CD8-positive, alpha-beta T cell (primary cell): ENCODE measurements at regions of chr1 and their contacts with region 1.

Region 1: DNA sequence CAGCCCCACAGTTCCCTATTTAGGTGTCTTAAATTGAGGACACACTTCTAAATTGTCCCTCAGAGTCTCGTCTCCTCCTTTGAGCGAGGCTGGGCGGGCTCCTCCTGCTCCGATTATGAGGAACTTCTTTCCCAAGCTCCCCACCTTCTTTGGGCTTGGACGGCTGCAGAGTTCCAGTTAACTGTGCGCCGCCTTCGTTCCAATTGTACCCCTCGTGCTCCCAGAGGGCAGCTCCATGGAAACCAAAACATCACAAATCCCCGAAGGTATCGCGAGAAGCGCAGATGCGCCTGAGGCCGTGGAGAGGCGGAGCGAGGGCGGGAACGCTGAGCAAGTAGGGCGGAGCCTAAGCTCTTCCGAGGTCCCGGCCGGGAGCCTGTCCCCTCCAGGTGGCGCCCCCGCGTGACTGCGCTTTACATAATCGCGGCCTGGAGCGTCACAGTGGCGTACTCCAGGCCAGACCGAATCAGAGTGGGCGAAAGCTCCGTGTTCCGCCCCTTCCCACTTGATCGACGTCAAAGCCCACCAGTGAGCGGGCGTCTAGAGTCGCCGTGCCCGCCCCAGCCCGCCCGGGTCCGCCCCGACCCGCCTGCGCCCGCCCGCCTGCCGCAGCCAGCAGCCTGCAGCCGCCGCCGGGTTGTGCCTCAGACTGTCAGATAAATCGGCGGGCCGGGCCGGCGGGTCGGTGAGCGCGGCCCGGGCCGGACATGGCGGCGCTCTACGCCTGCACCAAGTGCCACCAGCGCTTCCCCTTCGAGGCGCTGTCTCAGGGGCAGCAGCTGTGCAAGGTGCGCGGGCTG is at the start of gene FAM76A:
- DNase-seq: peak; percentile 99 to 100 (median 99)
- ATAC-seq: peak; percentile 92
- H3K4me3 ChIP-seq: peak within 1 kb of the TSS; percentile 63 to 92
- H3K4me3 Mint-ChIP-seq: peak within 1 kb of the TSS; percentile 84
- H3K27ac ChIP-seq: peak within 1 kb of the TSS; percentile 94 to 96
- H3K27ac Mint-ChIP-seq: peak within 1 kb of the TSS; percentile 94
- H3K4me1 ChIP-seq: peaks cover 15% of the 10 kb centered on the region
- H3K4me1 Mint-ChIP-seq: peaks cover 26% of the 10 kb centered on the region
- H3K27me3 ChIP-seq: no peaks in the 10 kb centered on the region
- H3K27me3 Mint-ChIP-seq: no peaks in the 10 kb centered on the region
- CTCF ChIP-seq: peak; percentile 25
- total RNA-seq, gene FAM76A: 29.5 to 31.7 TPM

Region 2: GRCh38 chr1:27234049-27234882 is 491.3 kb before region 1 on chr1 and contains the start of gene WDTC1:
- CTCF ChIA-PET with region 1: no interaction called
- POLR2A ChIA-PET with region 1: no interaction called
- intact Hi-C with region 1: loop called in 1 of 2 experiments (anchors 1 kb)
- DNase-seq: peak; percentile 97 to 99 (median 98)
- ATAC-seq: peak; percentile 90
- H3K4me3 ChIP-seq: peak within 1 kb of the TSS; percentile 58 to 66
- H3K4me3 Mint-ChIP-seq: peak within 1 kb of the TSS; percentile 99
- H3K27ac ChIP-seq: peak within 1 kb of the TSS; percentile 74 to 93
- H3K27ac Mint-ChIP-seq: peak within 1 kb of the TSS; percentile 95
- H3K4me1 ChIP-seq: peaks cover 25% of the 10 kb centered on the region
- H3K4me1 Mint-ChIP-seq: peaks cover 37% of the 10 kb centered on the region
- H3K27me3 ChIP-seq: no peaks in the 10 kb centered on the region
- H3K27me3 Mint-ChIP-seq: no peaks in the 10 kb centered on the region
- CTCF ChIP-seq: no peak
- total RNA-seq, gene WDTC1: 17.8 to 18.1 TPM

Region 3: GRCh38 chr1:27372808-27373690 is 352.5 kb before region 1 on chr1:
- CTCF ChIA-PET with region 1: no interaction called
- POLR2A ChIA-PET with region 1: no interaction called
- intact Hi-C with region 1: no loop called
- DNase-seq: peak in 1 of 9 experiments; percentile 11
- ATAC-seq: no peak
- H3K4me3 ChIP-seq: no peak overlapping the region
- H3K4me3 Mint-ChIP-seq: no peak overlapping the region
- H3K27ac ChIP-seq: no peak overlapping the region
- H3K27ac Mint-ChIP-seq: no peak overlapping the region
- H3K4me1 ChIP-seq: peaks cover 5% of the 10 kb centered on the region
- H3K4me1 Mint-ChIP-seq: peaks cover 10% of the 10 kb centered on the region
- H3K27me3 ChIP-seq: no peaks in the 10 kb centered on the region
- H3K27me3 Mint-ChIP-seq: no peaks in the 10 kb centered on the region
- CTCF ChIP-seq: no peak

Region 4: GRCh38 chr1:27489910-27490741 is 235.4 kb before region 1 on chr1 and contains the start of gene WASF2:
- CTCF ChIA-PET with region 1: no interaction called
- POLR2A ChIA-PET with region 1: no interaction called
- intact Hi-C with region 1: loop called in 1 of 2 experiments (anchors 1 kb)
- DNase-seq: peak; percentile 93 to 98 (median 97)
- ATAC-seq: peak; percentile 95
- H3K4me3 ChIP-seq: peak within 1 kb of the TSS; percentile 97 to 99
- H3K4me3 Mint-ChIP-seq: peak within 1 kb of the TSS; percentile 98
- H3K27ac ChIP-seq: peak within 1 kb of the TSS; percentile 93 to 97
- H3K27ac Mint-ChIP-seq: peak within 1 kb of the TSS; percentile 99
- H3K4me1 ChIP-seq: peaks cover 19% of the 10 kb centered on the region
- H3K4me1 Mint-ChIP-seq: peaks cover 35% of the 10 kb centered on the region
- H3K27me3 ChIP-seq: no peaks in the 10 kb centered on the region
- H3K27me3 Mint-ChIP-seq: no peaks in the 10 kb centered on the region
- CTCF ChIP-seq: no peak
- total RNA-seq, gene WASF2: 91.6 to 95.0 TPM

Region 5: GRCh38 chr1:27671964-27672749 is 53.4 kb before region 1 on chr1 and contains the start of gene IFI6:
- CTCF ChIA-PET with region 1: interaction called, 13 read pairs
- POLR2A ChIA-PET with region 1: interaction called, 30 read pairs
- intact Hi-C with region 1: loop called (anchors 1 kb)
- DNase-seq: peak; percentile 47 to 94 (median 80)
- ATAC-seq: peak; percentile 92
- H3K4me3 ChIP-seq: peak within 1 kb of the TSS; percentile 48 to 71
- H3K4me3 Mint-ChIP-seq: peak within 1 kb of the TSS; percentile 92
- H3K27ac ChIP-seq: peak within 1 kb of the TSS; percentile 62 to 87
- H3K27ac Mint-ChIP-seq: peak within 1 kb of the TSS; percentile 98
- H3K4me1 ChIP-seq: peaks cover 35% of the 10 kb centered on the region
- H3K4me1 Mint-ChIP-seq: peaks cover 42% of the 10 kb centered on the region
- H3K27me3 ChIP-seq: no peaks in the 10 kb centered on the region
- H3K27me3 Mint-ChIP-seq: no peaks in the 10 kb centered on the region
- CTCF ChIP-seq: peak; percentile 28
- total RNA-seq, gene IFI6: 24.8 to 25.1 TPM

Region 6: DNA sequence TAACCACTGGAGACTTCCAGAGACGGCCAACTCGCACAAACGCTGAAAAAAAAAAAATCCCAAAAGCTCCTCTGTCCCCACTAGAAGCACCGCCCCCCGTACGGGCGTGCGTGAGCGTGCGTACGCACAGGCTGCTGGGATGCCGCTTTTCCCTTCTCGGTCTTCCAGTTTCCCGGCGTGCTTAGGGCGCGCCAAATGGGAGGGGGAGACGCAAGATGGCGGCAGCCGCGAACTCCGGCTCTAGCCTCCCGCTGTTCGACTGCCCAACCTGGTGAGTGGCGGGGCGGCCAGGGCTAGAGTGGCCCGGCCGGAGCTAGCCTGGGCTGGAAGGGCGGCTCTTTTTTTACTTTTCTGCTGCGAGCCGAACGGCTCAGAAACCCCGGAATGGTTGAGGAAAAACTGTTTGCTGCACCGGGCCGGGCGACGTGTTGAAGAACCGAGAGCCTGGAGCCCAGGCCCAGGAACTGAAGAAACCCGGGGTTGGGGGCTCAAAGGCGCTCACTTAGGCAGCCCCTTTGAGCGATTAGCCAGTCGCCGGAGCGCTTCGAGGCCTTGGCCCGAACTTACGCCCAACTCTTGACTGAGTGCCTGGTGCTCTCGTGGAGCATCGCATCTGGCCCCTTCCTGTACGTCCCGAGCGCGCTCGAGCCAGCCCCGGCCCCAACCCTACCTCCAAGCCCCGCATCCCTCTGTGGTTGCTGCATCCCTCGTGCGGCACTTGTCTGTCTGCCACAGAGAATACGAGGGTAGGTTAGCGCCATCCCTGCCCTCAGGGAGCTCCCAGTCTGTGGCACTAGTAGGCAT is 105.2 kb after region 1 on chr1 and contains the start of gene PPP1R8:
- CTCF ChIA-PET with region 1: no interaction called
- POLR2A ChIA-PET with region 1: interaction called, 7 read pairs
- intact Hi-C with region 1: loop called in 1 of 2 experiments (anchors 1 kb)
- DNase-seq: peak; percentile 69 to 96 (median 90)
- ATAC-seq: peak; percentile 99
- H3K4me3 ChIP-seq: peak within 1 kb of the TSS; percentile 91 to 99
- H3K4me3 Mint-ChIP-seq: peak within 1 kb of the TSS; percentile 91
- H3K27ac ChIP-seq: peak within 1 kb of the TSS; percentile 82 to 88
- H3K27ac Mint-ChIP-seq: peak within 1 kb of the TSS; percentile 91
- H3K4me1 ChIP-seq: peaks cover 25% of the 10 kb centered on the region
- H3K4me1 Mint-ChIP-seq: peaks cover 43% of the 10 kb centered on the region
- H3K27me3 ChIP-seq: no peaks in the 10 kb centered on the region
- H3K27me3 Mint-ChIP-seq: no peaks in the 10 kb centered on the region
- CTCF ChIP-seq: no peak
- total RNA-seq, gene PPP1R8: 24.9 to 25.3 TPM